ENCODE measurements at regions of chr14 and their contacts with region 1.

Region 1: DNA sequence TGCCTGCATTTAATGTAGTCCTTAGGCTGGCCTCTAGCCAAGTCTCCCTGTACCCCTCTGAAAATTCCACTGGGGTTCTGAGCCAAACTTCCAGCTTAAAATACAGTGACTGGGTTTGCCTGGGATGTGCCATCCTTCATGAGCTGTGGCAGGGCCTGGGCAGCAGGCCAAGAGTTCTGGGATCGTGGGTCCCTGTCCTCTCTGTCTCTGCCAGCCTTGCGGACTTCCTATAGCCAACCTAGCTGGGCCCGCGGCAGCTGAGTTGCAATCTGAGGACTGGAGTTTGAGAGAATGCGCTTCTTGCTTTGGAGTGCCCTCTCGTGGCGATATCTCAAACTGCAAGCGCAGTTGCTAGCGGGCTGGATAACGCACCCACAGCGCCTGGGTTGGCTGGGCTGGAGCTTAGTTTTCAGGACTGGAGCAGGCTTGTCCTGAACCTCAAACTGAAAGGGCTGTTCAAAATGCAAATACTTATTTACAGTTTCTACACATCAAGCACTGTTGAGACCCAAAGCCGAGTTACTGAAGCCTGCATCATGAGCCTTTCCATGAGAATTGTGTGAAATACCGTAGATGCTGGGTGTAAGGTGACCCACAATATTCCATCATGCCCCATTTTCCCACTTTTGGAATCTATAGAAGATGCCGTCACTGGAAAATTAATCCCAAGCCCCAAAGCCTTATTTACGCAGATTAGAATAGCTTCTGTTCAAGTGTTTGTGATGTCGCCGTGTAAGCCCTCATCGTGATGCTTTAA is 7.3 kb upstream of the IFI27L2 start:
- DNase-seq: peak; percentile 93
- ATAC-seq: peak; percentile 96
- H3K4me3 Mint-ChIP-seq: no peak overlapping the region
- H3K27ac Mint-ChIP-seq: no peak overlapping the region
- H3K4me1 Mint-ChIP-seq: peaks cover 2% of the 10 kb centered on the region
- H3K27me3 Mint-ChIP-seq: peaks cover 15% of the 10 kb centered on the region
- CTCF ChIP-seq: peak; percentile 95

Region 2: GRCh38 chr14:94001501-94002396 is 135.0 kb before region 1 on chr14:
- CTCF ChIA-PET with region 1: interaction called, 13 read pairs
- POLR2A ChIA-PET with region 1: no interaction called
- intact Hi-C with region 1: no loop called
- DNase-seq: peak; percentile 64
- ATAC-seq: peak; percentile 81
- H3K4me3 Mint-ChIP-seq: no peak overlapping the region
- H3K27ac Mint-ChIP-seq: peak overlapping the region; percentile 50
- H3K4me1 Mint-ChIP-seq: peaks cover 20% of the 10 kb centered on the region
- H3K27me3 Mint-ChIP-seq: peaks cover 12% of the 10 kb centered on the region
- CTCF ChIP-seq: peak; percentile 96

Region 3: GRCh38 chr14:94026173-94026888 is 110.4 kb before region 1 on chr14 and contains the start of gene OTUB2:
- CTCF ChIA-PET with region 1: interaction called, 115 read pairs
- POLR2A ChIA-PET with region 1: no interaction called
- intact Hi-C with region 1: no loop called
- DNase-seq: peak; percentile 98
- ATAC-seq: peak; percentile 96
- H3K4me3 Mint-ChIP-seq: peak within 1 kb of the TSS; percentile 42
- H3K27ac Mint-ChIP-seq: no peak within 1 kb of the TSS
- H3K4me1 Mint-ChIP-seq: peaks cover 40% of the 10 kb centered on the region
- H3K27me3 Mint-ChIP-seq: peaks cover 1% of the 10 kb centered on the region
- CTCF ChIP-seq: no peak
- total RNA-seq, gene OTUB2: 0.25 to 0.29 TPM

Region 4: DNA sequence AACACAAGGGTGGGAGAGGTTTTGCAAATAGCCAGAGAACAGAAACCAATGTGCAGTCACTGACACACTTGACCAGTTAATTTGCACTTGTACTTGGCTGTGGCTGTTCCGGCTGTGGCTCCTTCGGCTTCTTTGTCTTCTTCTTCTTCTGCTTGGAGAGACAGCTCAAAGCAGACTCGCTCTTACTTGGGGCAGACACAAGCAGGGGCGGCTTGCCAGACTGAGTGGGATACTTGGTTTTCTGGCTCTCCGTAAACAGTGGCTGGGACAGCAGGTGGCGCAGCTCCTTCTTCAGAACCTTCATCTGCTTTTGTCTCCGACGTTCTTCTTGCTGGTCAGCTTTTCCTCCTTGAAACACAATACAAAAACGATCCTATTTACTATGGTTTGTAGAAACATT is 85.6 kb before region 1 on chr14:
- CTCF ChIA-PET with region 1: interaction called, 25 read pairs
- POLR2A ChIA-PET with region 1: no interaction called
- intact Hi-C with region 1: no loop called
- DNase-seq: no peak
- ATAC-seq: no peak
- H3K4me3 Mint-ChIP-seq: no peak overlapping the region
- H3K27ac Mint-ChIP-seq: no peak overlapping the region
- H3K4me1 Mint-ChIP-seq: peaks cover 13% of the 10 kb centered on the region
- H3K27me3 Mint-ChIP-seq: no peaks in the 10 kb centered on the region
- CTCF ChIP-seq: no peak

Region 5: GRCh38 chr14:94080471-94081289 is 56.1 kb before region 1 on chr14 and contains the start of gene DDX24:
- CTCF ChIA-PET with region 1: interaction called, 20 read pairs
- POLR2A ChIA-PET with region 1: no interaction called
- intact Hi-C with region 1: no loop called
- DNase-seq: peak; percentile 98
- ATAC-seq: peak; percentile 98
- H3K4me3 Mint-ChIP-seq: peak within 1 kb of the TSS; percentile 98
- H3K27ac Mint-ChIP-seq: peak within 1 kb of the TSS; percentile 99
- H3K4me1 Mint-ChIP-seq: peaks cover 44% of the 10 kb centered on the region
- H3K27me3 Mint-ChIP-seq: no peaks in the 10 kb centered on the region
- CTCF ChIP-seq: no peak
- total RNA-seq, gene DDX24: 272 to 275 TPM

Region 6: GRCh38 chr14:94161981-94162380 is 25.2 kb after region 1 on chr14:
- CTCF ChIA-PET with region 1: interaction called, 16 read pairs
- POLR2A ChIA-PET with region 1: no interaction called
- intact Hi-C with region 1: no loop called
- DNase-seq: no peak
- ATAC-seq: no peak
- H3K4me3 Mint-ChIP-seq: no peak overlapping the region
- H3K27ac Mint-ChIP-seq: no peak overlapping the region
- H3K4me1 Mint-ChIP-seq: peaks cover 40% of the 10 kb centered on the region
- H3K27me3 Mint-ChIP-seq: peaks cover 1% of the 10 kb centered on the region
- CTCF ChIP-seq: no peak

Region 7: GRCh38 chr14:94180655-94181271 is 44.0 kb after region 1 on chr14:
- CTCF ChIA-PET with region 1: interaction called, 92 read pairs
- POLR2A ChIA-PET with region 1: interaction called, 4 read pairs
- intact Hi-C with region 1: loop called (anchors 2 kb)
- DNase-seq: no peak
- ATAC-seq: peak; percentile 81
- H3K4me3 Mint-ChIP-seq: peak overlapping the region; percentile 47
- H3K27ac Mint-ChIP-seq: peak overlapping the region; percentile 5
- H3K4me1 Mint-ChIP-seq: peaks cover 13% of the 10 kb centered on the region
- H3K27me3 Mint-ChIP-seq: peaks cover 19% of the 10 kb centered on the region
- CTCF ChIP-seq: peak; percentile 73

Region 8: GRCh38 chr14:94355191-94355797 is 218.5 kb after region 1 on chr14:
- CTCF ChIA-PET with region 1: no interaction called
- POLR2A ChIA-PET with region 1: no interaction called
- intact Hi-C with region 1: no loop called
- DNase-seq: peak; percentile 35
- ATAC-seq: no peak
- H3K4me3 Mint-ChIP-seq: no peak overlapping the region
- H3K27ac Mint-ChIP-seq: no peak overlapping the region
- H3K4me1 Mint-ChIP-seq: no peaks in the 10 kb centered on the region
- H3K27me3 Mint-ChIP-seq: peaks cover 14% of the 10 kb centered on the region
- CTCF ChIP-seq: no peak

Region 9: DNA sequence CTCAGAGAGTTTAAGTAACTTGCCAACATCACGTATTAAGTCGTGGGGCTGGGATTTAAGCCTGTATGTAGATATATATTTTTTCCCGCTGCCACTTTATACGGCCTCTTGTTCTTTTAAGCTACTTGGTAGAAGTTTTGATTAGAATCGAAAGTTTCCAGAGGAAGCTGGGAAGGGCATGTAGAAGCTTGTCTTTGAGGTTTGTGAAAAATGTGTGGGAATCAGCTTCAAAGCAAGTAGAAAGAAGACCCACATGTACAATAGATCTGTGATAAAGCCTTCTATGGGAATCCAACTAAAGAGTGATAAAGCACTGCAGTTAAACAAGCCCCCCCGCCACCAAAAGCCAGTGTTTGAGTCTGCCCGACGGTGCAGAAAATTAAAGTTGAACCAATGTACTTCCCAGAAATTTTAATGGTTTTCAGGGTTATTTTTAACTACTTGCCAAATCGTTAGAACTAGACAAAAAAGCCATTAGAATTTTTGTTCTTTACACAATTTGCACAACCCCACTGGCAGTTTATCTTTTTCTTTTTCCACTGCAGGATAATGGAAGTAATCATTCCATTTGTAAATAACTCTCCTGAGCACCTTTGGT is 290.4 kb after region 1 on chr14:
- CTCF ChIA-PET with region 1: no interaction called
- POLR2A ChIA-PET with region 1: no interaction called
- intact Hi-C with region 1: no loop called
- DNase-seq: no peak
- ATAC-seq: no peak
- H3K4me3 Mint-ChIP-seq: no peak overlapping the region
- H3K27ac Mint-ChIP-seq: no peak overlapping the region
- H3K4me1 Mint-ChIP-seq: no peaks in the 10 kb centered on the region
- H3K27me3 Mint-ChIP-seq: peaks cover 25% of the 10 kb centered on the region
- CTCF ChIP-seq: no peak

Measured in activated CD8-positive, alpha-beta T cell treated with anti-CD3 and anti-CD28 coated beads for 36 hours (primary cell).